Activated T-helper 1 cell treated with anti-CD3 and anti-CD28 coated beads, Interleukin-12 subunit alpha, Interleukin-12 subunit beta, Interleukin-2, Interleukin-4 antibody, amounts not matched to agents 30 ng/mL and 10 ng/mL and 1 ng/mL, durations not matched to agents 14 hours and 24 hours and 36 hours (primary cell): ENCODE measurements at regions of chr1 and their contacts with region 1.

Region 1: DNA sequence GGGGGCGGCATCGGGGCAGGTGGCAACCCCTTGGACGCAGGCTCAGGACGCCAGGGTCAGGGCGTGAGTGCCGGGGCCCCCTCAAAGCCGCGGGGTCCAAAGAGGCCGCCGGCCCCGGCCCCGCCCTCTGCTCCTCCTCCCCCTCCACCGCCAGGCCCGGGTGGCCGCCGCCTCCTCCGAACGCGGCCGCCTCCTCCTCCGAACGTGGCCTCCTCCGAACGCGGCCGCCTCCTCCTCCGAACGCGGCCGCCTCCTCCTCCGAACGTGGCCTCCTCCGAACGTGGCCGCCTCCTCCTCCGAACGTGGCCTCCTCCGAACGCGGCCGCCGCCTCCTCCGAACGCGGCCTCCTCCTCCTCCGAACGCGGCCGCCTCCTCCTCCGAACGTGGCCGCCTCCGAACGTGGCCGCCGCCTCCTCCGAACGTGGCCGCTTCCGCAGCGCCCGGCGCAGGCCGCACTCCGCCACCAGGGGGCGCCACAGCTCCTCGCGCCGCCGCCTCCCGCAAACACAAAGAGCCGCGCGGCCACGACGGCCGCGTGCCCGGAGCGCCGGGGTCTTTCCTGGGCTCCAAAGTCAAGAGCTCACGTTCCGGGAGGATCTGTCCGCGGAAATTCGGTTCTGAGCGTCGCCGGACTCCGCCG is 19.3 kb upstream of the SAMD11 start:
- DNase-seq: peak; percentile 83
- H3K4me3 Mint-ChIP-seq: peak overlapping the region; percentile 45
- H3K27ac Mint-ChIP-seq: no peak overlapping the region
- H3K4me1 Mint-ChIP-seq: peaks cover 5% of the 10 kb centered on the region
- H3K27me3 Mint-ChIP-seq: peaks cover 40% of the 10 kb centered on the region

Region 2: GRCh38 chr1:890661-891060 is 13.8 kb before region 1 on chr1:
- intact Hi-C with region 1: loop called (anchors 2 kb)
- DNase-seq: no peak
- H3K4me3 Mint-ChIP-seq: no peak overlapping the region
- H3K27ac Mint-ChIP-seq: no peak overlapping the region
- H3K4me1 Mint-ChIP-seq: peaks cover 8% of the 10 kb centered on the region
- H3K27me3 Mint-ChIP-seq: peaks cover 46% of the 10 kb centered on the region

Region 3: GRCh38 chr1:941588-942383 is 37.4 kb after region 1 on chr1:
- intact Hi-C with region 1: loop called (anchors 2 kb)
- DNase-seq: no peak
- H3K4me3 Mint-ChIP-seq: no peak overlapping the region
- H3K27ac Mint-ChIP-seq: no peak overlapping the region
- H3K4me1 Mint-ChIP-seq: peaks cover 4% of the 10 kb centered on the region
- H3K27me3 Mint-ChIP-seq: peaks cover 30% of the 10 kb centered on the region

Region 4: GRCh38 chr1:958823-959729 is 54.6 kb after region 1 on chr1 and contains the start of gene NOC2L:
- intact Hi-C with region 1: loop called (anchors 5 kb)
- DNase-seq: peak; percentile 88
- H3K4me3 Mint-ChIP-seq: peak within 1 kb of the TSS; percentile 97
- H3K27ac Mint-ChIP-seq: peak within 1 kb of the TSS; percentile 79
- H3K4me1 Mint-ChIP-seq: peaks cover 7% of the 10 kb centered on the region
- H3K27me3 Mint-ChIP-seq: peaks cover 2% of the 10 kb centered on the region
- total RNA-seq, gene NOC2L: 180 TPM in 2 replicates

Region 5: DNA sequence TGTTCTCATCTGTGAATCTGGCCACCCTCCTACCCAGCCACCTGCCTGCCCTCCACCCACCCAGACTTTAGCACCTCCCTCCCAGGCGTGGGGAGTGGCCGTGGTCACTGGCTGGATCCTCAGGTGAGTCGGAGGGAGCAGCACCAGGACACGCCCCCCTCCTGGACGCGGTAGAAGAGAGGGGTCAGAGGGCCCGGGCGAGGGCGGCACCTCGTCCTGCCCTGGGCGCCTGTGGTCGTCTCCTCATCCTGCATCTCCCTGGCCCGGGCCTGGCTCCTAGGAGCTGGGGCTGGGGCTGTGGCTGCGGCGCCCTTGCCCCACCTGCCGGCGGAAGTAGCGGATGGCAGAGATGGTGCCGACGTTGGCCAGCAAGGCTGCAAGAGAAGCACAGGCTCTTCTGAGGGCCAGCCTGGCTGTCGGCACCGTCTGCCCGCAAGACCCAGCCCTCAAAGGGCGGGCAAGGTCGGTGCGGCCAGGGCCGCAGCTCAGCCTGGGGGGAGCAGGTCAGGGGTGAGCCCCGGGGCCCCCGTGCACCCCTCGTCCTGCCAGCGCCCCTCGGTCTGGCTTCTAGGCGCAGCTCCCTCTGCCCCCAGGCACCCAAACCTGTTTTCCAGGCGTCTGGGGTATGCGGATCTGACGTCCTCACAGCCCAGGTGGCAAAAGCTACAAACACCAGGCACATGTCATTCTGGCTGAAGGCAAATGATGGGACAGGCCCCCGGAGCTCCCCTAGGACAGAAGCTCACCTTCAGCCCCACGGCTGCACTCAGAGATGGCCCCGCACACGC is 71.7 kb after region 1 on chr1:
- intact Hi-C with region 1: loop called (anchors 2 kb)
- DNase-seq: peak; percentile 56
- H3K4me3 Mint-ChIP-seq: no peak overlapping the region
- H3K27ac Mint-ChIP-seq: no peak overlapping the region
- H3K4me1 Mint-ChIP-seq: no peaks in the 10 kb centered on the region
- H3K27me3 Mint-ChIP-seq: peaks cover 5% of the 10 kb centered on the region